K562 (cell line): ENCODE measurements at regions of chr2 and their contacts with region 1.

Region 1: DNA sequence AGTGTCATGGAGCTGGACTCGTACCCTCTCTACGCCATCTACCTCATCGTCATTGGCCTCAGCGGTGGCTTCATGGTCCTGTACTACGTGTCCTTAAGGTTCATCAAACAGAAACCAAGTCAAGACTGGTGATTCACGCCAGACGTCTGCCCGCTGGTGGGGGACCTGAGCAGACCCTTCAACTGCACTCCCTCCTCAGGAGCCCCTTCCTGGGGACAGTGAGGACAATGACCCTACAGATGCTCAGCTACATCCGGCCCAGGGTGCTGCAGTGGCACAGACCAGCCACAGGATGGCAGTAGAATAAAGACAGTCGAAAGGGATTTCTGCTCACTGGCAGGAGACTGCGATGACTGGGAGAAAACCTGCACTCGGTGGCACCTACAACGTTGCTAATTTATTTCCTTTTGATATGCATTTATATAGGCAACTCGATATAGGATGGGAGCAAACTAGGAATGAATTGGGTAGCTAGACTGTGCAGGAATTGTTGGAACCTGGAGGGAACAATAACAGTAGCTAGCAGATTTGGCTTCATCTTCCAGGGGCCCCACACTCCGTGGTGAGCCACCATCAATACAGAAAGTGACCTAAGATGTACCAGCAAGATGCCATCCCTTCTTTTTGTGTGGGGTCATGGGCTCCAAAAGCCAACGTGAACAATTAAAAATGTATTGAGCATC is 39.2 kb downstream of the ABCG8 start:
- DNase-seq: peak; percentile 73 to 81 (median 78)
- ATAC-seq: peak; percentile 93
- H3K4me3 ChIP-seq: no peak overlapping the region
- H3K27ac ChIP-seq: no peak overlapping the region
- H3K4me1 ChIP-seq: no peaks in the 10 kb centered on the region
- H3K27me3 ChIP-seq: peaks cover 18 to 41% of the 10 kb centered on the region in 2 experiments; a peak in 4 of 5 replicates
- CTCF ChIP-seq: peak; percentile 85 to 97 (median 89)
- EP300 ChIP-seq: no peak
- POLR2A ChIP-seq: no peak
- RAD21 ChIP-seq: peak; percentile 76 to 89

Region 2: DNA sequence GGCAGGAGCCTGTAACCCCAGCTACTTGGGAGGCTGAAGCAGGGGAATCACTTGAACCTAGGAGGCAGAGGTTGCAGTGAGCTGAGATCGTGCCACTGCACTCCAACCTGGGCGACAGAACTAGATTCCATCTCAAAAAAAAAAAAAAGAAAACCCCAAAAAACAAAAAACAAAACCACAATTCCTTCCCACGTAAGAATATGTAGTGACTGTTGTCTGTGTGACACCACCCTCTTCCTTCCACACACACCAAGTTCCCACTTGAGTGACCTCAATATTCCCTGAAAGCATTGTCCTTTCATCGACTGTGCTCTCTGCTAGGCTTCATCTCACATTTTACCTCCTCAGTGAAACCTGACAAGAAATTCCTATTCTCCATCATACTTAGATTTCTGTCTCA is 273.2 kb before region 1 on chr2:
- CTCF ChIA-PET with region 1: interaction called, 4 read pairs
- POLR2A ChIA-PET with region 1: no interaction called
- in situ Hi-C with region 1: loop called (anchors 5 kb)
- intact Hi-C with region 1: no loop called
- DNase-seq: no peak
- ATAC-seq: no peak
- H3K4me3 ChIP-seq: no peak overlapping the region
- H3K27ac ChIP-seq: no peak overlapping the region
- H3K4me1 ChIP-seq: no peaks in the 10 kb centered on the region; a peak in 1 of 5 replicates
- H3K27me3 ChIP-seq: no peaks in the 10 kb centered on the region
- CTCF ChIP-seq: no peak
- EP300 ChIP-seq: no peak
- POLR2A ChIP-seq: no peak
- RAD21 ChIP-seq: no peak

Region 3: GRCh38 chr2:43611987-43612894 is 265.7 kb before region 1 on chr2:
- CTCF ChIA-PET with region 1: interaction called, 4 read pairs
- POLR2A ChIA-PET with region 1: no interaction called
- in situ Hi-C with region 1: no loop called
- intact Hi-C with region 1: loop called (anchors 2 kb)
- DNase-seq: peak; percentile 68 to 81 (median 73)
- ATAC-seq: peak; percentile 95
- H3K4me3 ChIP-seq: no peak overlapping the region
- H3K27ac ChIP-seq: no peak overlapping the region
- H3K4me1 ChIP-seq: peaks cover 0 to 2% of the 10 kb centered on the region in 2 experiments; a peak in 1 of 5 replicates
- H3K27me3 ChIP-seq: no peaks in the 10 kb centered on the region
- CTCF ChIP-seq: peak; percentile 68 to 86 (median 84)
- EP300 ChIP-seq: no peak
- POLR2A ChIP-seq: no peak
- RAD21 ChIP-seq: peak; percentile 63 to 85

Region 4: DNA sequence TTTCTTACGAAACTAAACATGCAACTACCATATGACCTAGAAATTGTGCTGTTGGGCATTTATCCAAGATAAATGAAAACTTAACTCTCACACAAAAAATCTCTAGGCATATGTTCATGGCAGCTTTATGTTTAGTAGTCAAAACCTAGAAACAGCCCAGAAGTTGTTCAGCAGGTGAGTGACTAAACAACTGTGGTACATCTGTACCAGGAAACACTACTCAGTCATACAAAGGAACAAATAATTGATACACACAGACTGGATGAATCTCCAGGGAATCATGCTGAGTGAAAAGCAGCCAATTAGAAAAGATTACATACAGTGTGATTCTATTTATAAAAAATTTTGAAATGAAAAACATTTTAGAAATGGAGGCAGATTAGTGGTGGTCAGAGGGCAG is 74.8 kb before region 1 on chr2:
- CTCF ChIA-PET with region 1: no interaction called
- POLR2A ChIA-PET with region 1: interaction called, 3 read pairs
- in situ Hi-C with region 1: no loop called
- intact Hi-C with region 1: loop called (anchors 5 kb)
- DNase-seq: no peak
- ATAC-seq: no peak
- H3K4me3 ChIP-seq: no peak overlapping the region
- H3K27ac ChIP-seq: no peak overlapping the region
- H3K4me1 ChIP-seq: no peaks in the 10 kb centered on the region
- H3K27me3 ChIP-seq: no peaks in the 10 kb centered on the region
- CTCF ChIP-seq: no peak
- EP300 ChIP-seq: no peak
- POLR2A ChIP-seq: no peak
- RAD21 ChIP-seq: no peak

Region 5: GRCh38 chr2:43814711-43815110 is 63.2 kb before region 1 on chr2:
- CTCF ChIA-PET with region 1: no interaction called
- POLR2A ChIA-PET with region 1: no interaction called
- in situ Hi-C with region 1: no loop called
- intact Hi-C with region 1: no loop called
- DNase-seq: no peak
- ATAC-seq: no peak
- H3K4me3 ChIP-seq: no peak overlapping the region
- H3K27ac ChIP-seq: no peak overlapping the region
- H3K4me1 ChIP-seq: no peaks in the 10 kb centered on the region; a peak in 1 of 5 replicates
- H3K27me3 ChIP-seq: no peaks in the 10 kb centered on the region
- CTCF ChIP-seq: no peak
- EP300 ChIP-seq: no peak
- POLR2A ChIP-seq: no peak
- RAD21 ChIP-seq: no peak

Region 6: GRCh38 chr2:44244129-44244871 is 366.4 kb after region 1 on chr2:
- CTCF ChIA-PET with region 1: no interaction called
- POLR2A ChIA-PET with region 1: no interaction called
- in situ Hi-C with region 1: no loop called
- intact Hi-C with region 1: loop called (anchors 10 kb)
- DNase-seq: peak; percentile 46 to 74 (median 53)
- ATAC-seq: peak; percentile 86
- H3K4me3 ChIP-seq: no peak overlapping the region
- H3K27ac ChIP-seq: no peak overlapping the region
- H3K4me1 ChIP-seq: no peaks in the 10 kb centered on the region; a peak in 1 of 5 replicates
- H3K27me3 ChIP-seq: peaks cover 3% of the 10 kb centered on the region in 2 experiments; a peak in 2 of 5 replicates
- CTCF ChIP-seq: peak; percentile 48 to 68 (median 60); a peak in 5 of 6 replicates
- EP300 ChIP-seq: no peak
- POLR2A ChIP-seq: no peak
- RAD21 ChIP-seq: peak; percentile 40 to 50

Region 7: DNA sequence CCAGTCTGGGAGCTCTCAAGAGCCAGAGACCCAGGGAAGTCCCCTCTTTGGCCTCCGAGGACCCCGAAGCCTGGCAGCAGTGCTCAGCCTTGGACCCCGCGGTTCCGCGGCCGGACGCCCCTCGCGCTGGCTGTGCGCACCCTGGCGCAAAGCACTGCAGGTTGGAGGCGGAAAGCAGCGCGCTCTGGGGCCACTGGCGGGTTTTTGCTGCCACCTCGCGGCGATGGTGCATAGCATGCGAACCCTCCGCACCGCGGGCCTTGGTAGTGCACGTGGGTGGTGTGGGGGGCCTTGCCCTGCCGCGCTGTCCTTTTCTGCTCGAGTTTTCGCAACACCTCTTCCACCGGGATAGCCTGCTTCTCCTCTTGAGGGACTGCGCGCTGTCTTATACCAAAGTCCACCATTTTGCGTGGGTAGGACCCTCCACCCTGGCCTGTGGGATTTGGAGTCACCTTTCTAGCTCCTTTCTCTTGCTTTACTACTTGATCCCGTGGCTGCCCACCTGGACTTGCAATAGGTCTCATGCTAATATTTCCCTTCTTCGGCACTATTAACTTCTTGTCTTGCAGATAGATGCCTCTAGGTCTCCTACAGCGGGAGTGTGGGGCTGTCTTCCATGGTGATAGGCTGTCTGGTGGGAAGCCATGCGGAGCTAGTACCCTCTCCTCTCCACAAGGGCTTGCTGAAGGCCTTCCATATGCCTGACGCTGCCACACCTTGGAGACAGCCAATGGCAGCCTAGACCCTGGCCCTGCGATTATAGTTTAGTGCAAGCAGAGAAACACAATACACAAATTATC is 1077.9 kb after region 1 on chr2:
- CTCF ChIA-PET with region 1: no interaction called
- POLR2A ChIA-PET with region 1: no interaction called
- in situ Hi-C with region 1: no loop called
- intact Hi-C with region 1: loop called (anchors 5 kb)
- DNase-seq: peak; percentile 75 to 78 (median 78)
- ATAC-seq: peak; percentile 93
- H3K4me3 ChIP-seq: no peak overlapping the region
- H3K27ac ChIP-seq: no peak overlapping the region
- H3K4me1 ChIP-seq: peaks cover 0 to 26% of the 10 kb centered on the region in 2 experiments; a peak in 3 of 5 replicates
- H3K27me3 ChIP-seq: peaks cover 19 to 66% of the 10 kb centered on the region in 2 experiments; a peak in 4 of 5 replicates
- CTCF ChIP-seq: peak; percentile 79 to 97 (median 87)
- EP300 ChIP-seq: no peak
- POLR2A ChIP-seq: no peak
- RAD21 ChIP-seq: peak; percentile 83 to 92